ENCODE measurements at regions of chr7 and their contacts with region 1.

Region 1: DNA sequence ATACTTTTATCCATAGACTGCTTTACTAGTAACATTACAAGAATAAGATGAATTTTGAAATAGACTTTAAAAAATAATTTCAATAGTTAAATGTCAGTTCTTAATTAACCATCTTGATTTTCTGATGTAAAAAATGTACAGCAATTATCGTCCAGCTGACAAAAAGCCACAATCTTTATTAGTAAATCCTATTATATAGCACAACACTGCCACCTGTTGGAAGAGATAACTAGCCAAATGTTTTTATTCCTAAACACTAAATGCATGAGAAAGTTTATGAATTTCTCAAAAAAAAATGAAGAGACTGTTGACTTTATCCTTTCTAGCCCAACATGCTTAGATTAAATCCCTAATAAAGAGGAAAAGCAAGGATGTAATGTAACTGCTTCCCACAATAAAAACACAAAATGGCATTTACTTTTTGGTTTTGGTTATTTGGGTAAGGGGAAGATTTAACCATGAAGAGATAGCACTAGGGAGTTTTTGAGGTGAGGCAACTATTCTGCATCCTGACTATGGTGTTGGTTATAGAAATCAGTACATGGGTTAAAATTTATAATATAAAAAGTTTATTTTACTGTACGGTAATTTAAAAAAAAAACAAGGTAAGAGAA is 8.0 kb downstream of the COA1 start:
- DNase-seq: peak in 5 of 35 experiments; percentile 2 to 80 (median 15)
- ATAC-seq: peak in 1 of 4 experiments; percentile 31
- H3K4me3 ChIP-seq: no peak overlapping the region
- H3K4me3 Mint-ChIP-seq: no peak overlapping the region
- H3K27ac ChIP-seq: no peak overlapping the region
- H3K27ac Mint-ChIP-seq: peak overlapping the region in 1 of 2 donors; percentile 56
- H3K4me1 ChIP-seq: peaks cover 2 to 4% of the 10 kb centered on the region in 2 experiments
- H3K4me1 Mint-ChIP-seq: peaks cover 53 to 59% (median 53%) of the 10 kb centered on the region in 3 donors
- H3K27me3 ChIP-seq: no peaks in the 10 kb centered on the region
- H3K27me3 Mint-ChIP-seq: no peaks in the 10 kb centered on the region

Region 2: DNA sequence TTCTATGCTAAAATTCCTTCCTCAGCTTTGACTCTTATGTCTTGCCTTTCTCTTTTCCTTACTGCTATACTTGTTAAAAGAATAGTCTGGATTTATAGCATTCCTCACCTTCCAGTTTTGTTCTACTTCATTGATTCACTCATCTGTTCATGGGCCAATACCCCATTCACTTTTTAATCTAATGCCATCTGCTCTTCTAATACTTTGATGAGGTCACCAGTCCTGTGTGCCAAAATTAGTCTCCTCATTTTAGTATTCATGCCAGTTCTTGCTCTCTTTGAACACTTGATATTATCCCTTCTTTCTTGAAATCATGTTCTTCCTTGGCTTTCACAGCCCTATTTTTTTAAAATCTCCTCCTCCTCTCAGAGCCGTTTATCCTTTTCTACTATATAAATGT is 119.0 kb before region 1 on chr7:
- CTCF ChIA-PET with region 1: interaction called, 4 to 11 read pairs
- POLR2A ChIA-PET with region 1: no interaction called
- DNase-seq: no peak
- ATAC-seq: no peak
- H3K4me3 ChIP-seq: no peak overlapping the region
- H3K4me3 Mint-ChIP-seq: no peak overlapping the region
- H3K27ac ChIP-seq: no peak overlapping the region
- H3K27ac Mint-ChIP-seq: no peak overlapping the region
- H3K4me1 ChIP-seq: peaks cover 52 to 53% of the 10 kb centered on the region in 2 experiments
- H3K4me1 Mint-ChIP-seq: peaks cover 49 to 51% (median 50%) of the 10 kb centered on the region in 3 donors
- H3K27me3 ChIP-seq: no peaks in the 10 kb centered on the region
- H3K27me3 Mint-ChIP-seq: no peaks in the 10 kb centered on the region

Region 3: DNA sequence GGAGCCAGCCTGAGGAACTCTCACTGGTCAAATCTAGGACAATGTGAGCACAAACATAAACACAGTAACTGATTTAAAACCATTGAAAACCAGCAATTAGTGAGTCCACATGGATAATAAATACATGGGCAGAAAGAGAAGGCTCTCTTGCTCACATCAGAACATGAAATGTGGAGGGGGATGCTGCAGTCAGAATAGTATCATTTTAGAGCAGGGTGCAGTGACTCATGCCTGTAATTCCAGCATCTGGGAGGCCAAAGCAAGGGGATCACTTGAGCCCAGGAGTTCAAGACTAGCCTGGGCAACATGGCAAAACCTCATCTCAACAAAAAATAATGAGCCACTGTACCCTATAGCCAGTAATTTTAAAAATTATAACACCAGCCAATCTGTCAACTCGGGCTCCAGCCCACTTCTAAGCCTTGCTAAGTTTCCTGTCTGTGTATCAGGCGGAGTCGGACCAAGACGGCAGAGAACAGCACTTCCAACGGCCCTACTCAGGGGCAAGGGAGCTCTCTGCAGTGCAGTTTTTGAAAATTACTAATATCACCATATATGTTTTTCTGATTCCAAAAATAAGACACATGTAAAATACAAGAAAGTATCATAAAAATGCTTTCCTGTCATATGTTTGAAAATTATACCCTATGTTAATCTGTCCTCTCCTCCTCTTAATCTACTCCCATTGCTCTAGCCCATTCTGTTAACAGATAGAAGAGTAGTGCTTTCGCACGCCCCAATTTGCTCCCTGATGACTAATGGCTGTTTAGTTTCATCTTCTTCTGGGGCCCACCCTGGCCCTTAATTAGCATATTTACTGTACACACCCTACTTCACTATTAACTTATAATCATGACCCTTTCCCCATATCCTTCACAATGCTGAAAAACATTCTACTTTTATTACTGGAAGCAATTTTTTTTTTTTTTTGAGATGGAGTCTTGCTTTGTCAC is 168.0 kb after region 1 on chr7:
- CTCF ChIA-PET with region 1: no interaction called
- POLR2A ChIA-PET with region 1: no interaction called
- DNase-seq: peak in 1 of 35 experiments; percentile 10
- ATAC-seq: peak in 2 of 4 experiments; percentile 45 to 54
- H3K4me3 ChIP-seq: no peak overlapping the region
- H3K4me3 Mint-ChIP-seq: no peak overlapping the region
- H3K27ac ChIP-seq: no peak overlapping the region
- H3K27ac Mint-ChIP-seq: no peak overlapping the region
- H3K4me1 ChIP-seq: peaks cover 4 to 21% of the 10 kb centered on the region in 2 experiments
- H3K4me1 Mint-ChIP-seq: peaks cover 41 to 46% (median 45%) of the 10 kb centered on the region in 3 donors
- H3K27me3 ChIP-seq: no peaks in the 10 kb centered on the region
- H3K27me3 Mint-ChIP-seq: no peaks in the 10 kb centered on the region